Transverse colon (tissue), 4 donors: ENCODE measurements at regions of chr2 and their contacts with region 1.

Region 1: GRCh38 chr2:134918526-134919340 is at the start of gene CCNT2:
- DNase-seq: peak; percentile 100
- H3K4me3 ChIP-seq: peak within 1 kb of the TSS; percentile 81 to 99 (median 92)
- H3K27ac ChIP-seq: peak within 1 kb of the TSS; percentile 95 to 100 (median 98)
- H3K4me1 ChIP-seq: peaks cover 21 to 51% (median 33%) of the 10 kb centered on the region in 4 donors
- H3K27me3 ChIP-seq: no peaks in the 10 kb centered on the region
- CTCF ChIP-seq: peak in 2 of 5 experiments; percentile 3 to 20
- EP300 ChIP-seq: no peak
- POLR2A ChIP-seq: peak; percentile 49
- total RNA-seq, gene CCNT2: 24.7 to 57.5 (median 44.6) TPM

Region 2: DNA sequence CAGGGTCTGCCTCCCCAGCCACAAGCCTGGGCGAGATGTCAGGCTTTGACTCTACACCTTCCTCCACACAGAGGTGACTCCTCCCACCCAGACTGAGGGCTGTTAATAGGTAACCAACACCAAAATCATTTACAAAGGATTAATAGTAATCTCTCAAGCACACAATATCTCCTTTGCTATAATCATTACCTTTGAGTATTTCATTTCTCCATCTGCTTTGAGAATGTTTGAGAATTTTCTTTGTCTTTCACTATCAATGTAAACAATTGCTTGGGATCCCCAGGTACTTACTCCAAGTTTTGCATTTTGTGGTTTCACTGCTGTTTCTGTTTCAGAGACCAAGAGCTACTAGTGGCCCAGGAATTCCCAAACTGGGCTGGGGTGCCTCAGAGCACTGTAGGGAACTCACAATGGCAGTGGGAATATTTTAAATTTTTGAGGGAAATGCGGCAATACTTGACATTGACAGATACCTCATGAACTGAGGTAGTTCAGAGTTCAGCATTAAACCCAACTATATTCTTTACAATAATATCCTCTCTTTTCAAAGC is 831.3 kb before region 1 on chr2:
- in situ Hi-C with region 1: loop called in 1 of 4 experiments (anchors 25 kb)
- intact Hi-C with region 1: no loop called
- DNase-seq: no peak
- H3K4me3 ChIP-seq: no peak overlapping the region
- H3K27ac ChIP-seq: no peak overlapping the region
- H3K4me1 ChIP-seq: no peaks in the 10 kb centered on the region
- H3K27me3 ChIP-seq: no peaks in the 10 kb centered on the region
- CTCF ChIP-seq: no peak
- EP300 ChIP-seq: no peak
- POLR2A ChIP-seq: no peak

Region 3: DNA sequence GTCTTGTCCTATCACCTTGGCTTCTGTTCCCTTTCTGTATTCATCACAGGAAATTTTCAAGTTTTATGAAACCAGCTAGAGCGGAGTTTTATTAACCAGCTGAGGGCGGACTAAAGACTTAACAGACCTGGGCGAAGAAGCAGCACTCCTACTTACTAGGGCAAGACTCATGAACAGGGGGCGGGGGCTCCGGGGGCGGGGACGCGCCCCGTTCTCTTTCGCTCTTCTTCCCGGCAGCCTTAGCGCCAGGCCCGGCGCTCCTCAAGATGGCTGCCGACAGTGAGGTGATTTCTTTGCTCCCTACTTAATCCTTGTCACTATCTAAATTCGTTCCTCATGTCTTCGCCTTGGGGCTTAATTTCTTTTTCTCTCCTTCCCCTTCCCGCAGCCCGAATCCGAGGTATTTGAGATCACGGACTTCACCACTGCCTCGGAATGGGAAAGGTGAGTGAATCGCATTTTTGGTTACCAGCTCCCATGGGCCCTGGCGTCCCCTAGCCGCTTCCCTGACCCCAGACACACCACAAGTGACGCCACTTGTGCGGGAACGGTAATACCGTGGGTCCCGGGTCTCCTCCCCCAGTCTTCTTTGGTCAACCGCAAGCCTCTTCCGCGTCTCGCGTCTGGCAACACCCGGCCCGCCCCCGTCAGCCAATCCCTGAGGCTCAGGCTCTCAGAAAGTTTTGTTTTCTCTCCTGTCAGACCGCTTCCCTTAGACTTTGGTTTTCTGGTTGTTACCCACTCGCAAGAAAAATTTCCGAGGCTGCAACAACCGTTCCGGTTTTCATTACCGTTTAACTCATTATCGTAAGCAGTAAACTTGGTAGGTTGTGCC is 133.5 kb after region 1 on chr2 and contains the start of gene RAB3GAP1:
- in situ Hi-C with region 1: no loop called
- intact Hi-C with region 1: no loop called
- DNase-seq: peak; percentile 86
- H3K4me3 ChIP-seq: peak within 1 kb of the TSS; percentile 52 to 96 (median 67)
- H3K27ac ChIP-seq: peak within 1 kb of the TSS; percentile 91 to 99 (median 92)
- H3K4me1 ChIP-seq: peaks cover 17 to 34% (median 22%) of the 10 kb centered on the region in 4 donors
- H3K27me3 ChIP-seq: no peaks in the 10 kb centered on the region
- CTCF ChIP-seq: no peak
- EP300 ChIP-seq: no peak
- POLR2A ChIP-seq: peak; percentile 81
- total RNA-seq, gene RAB3GAP1: 38.4 to 63.5 (median 53.8) TPM